Ovary (tissue), 10 donors: ENCODE measurements at regions of chr13 and their contacts with region 1.

Region 1: DNA sequence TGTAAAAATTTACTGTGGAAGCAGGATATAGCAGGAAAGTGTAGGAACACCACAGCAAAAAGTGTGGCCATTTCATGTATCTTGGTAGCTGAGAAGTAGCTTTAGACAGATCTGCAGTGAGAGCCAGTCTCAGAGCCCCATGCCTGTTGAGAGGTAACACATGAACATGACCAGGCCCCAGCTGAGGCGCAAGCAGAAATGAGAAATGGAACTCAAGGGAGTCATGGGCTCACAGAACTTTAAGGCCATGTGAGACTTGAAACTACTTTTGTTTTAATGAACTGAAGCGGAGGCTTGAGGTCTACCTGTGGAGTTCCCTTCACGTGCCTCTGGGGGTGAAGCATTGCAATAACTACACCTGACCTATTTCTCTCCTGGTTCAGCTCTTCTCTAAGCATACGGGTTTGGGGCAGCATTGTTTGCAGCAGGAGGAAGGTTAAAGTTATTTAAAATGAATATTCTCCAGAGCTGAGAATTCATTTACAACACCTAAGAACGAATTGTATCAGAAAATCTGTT is 3.3 kb downstream of the MYO16 start:
- DNase-seq: no peak
- H3K4me3 ChIP-seq: no peak overlapping the region
- H3K27ac ChIP-seq: no peak overlapping the region
- H3K4me1 ChIP-seq: no peaks in the 10 kb centered on the region
- H3K27me3 ChIP-seq: no peaks in the 10 kb centered on the region
- CTCF ChIP-seq: no peak
- EP300 ChIP-seq: no peak
- POLR2A ChIP-seq: no peak

Region 2: GRCh38 chr13:108690726-108691125 is 58.0 kb after region 1 on chr13:
- intact Hi-C with region 1: loop called in 1 of 4 experiments (anchors 2 kb)
- DNase-seq: no peak
- H3K4me3 ChIP-seq: no peak overlapping the region
- H3K27ac ChIP-seq: no peak overlapping the region
- H3K4me1 ChIP-seq: no peaks in the 10 kb centered on the region
- H3K27me3 ChIP-seq: no peaks in the 10 kb centered on the region
- CTCF ChIP-seq: no peak
- EP300 ChIP-seq: no peak
- POLR2A ChIP-seq: no peak